Activated CD4-positive, alpha-beta memory T cell treated with anti-CD3 and anti-CD28 coated beads for 36 hours (primary cell): ENCODE measurements at regions of chr6 and their contacts with region 1.

Region 1: GRCh38 chr6:136643850-136644596 is 93.8 kb upstream of the MAP7 start:
- DNase-seq: peak; percentile 85
- H3K4me3 Mint-ChIP-seq: no peak overlapping the region
- H3K27ac Mint-ChIP-seq: no peak overlapping the region
- H3K4me1 Mint-ChIP-seq: no peaks in the 10 kb centered on the region
- H3K27me3 Mint-ChIP-seq: no peaks in the 10 kb centered on the region

Region 2: GRCh38 chr6:136607932-136608772 is 35.9 kb before region 1 on chr6:
- CTCF ChIA-PET with region 1: interaction called, 14 read pairs
- POLR2A ChIA-PET with region 1: no interaction called
- intact Hi-C with region 1: loop called (anchors 5 kb)
- DNase-seq: peak; percentile 90
- H3K4me3 Mint-ChIP-seq: no peak overlapping the region
- H3K27ac Mint-ChIP-seq: no peak overlapping the region
- H3K4me1 Mint-ChIP-seq: peaks cover 15% of the 10 kb centered on the region
- H3K27me3 Mint-ChIP-seq: no peaks in the 10 kb centered on the region

Region 3: DNA sequence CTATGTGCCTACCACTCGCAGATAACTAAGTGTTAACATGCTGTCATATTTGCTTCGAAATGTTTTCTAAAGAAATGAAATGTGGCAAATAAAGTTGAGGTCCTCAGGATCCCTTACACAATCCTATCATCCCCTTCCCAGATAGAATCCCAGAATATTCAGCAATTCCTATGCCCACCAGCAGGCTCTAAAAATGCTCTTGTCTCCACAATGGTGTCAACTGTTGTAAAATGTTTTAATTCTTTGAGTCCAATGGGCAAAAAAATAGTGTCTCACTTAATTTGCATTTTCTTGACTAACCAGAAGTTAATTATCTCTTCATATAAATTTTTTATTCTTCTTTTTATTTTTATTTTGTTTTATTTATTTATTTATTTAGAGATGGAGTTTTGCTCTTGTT is 10.1 kb after region 1 on chr6:
- CTCF ChIA-PET with region 1: interaction called, 10 read pairs
- POLR2A ChIA-PET with region 1: no interaction called
- intact Hi-C with region 1: no loop called
- DNase-seq: no peak
- H3K4me3 Mint-ChIP-seq: no peak overlapping the region
- H3K27ac Mint-ChIP-seq: no peak overlapping the region
- H3K4me1 Mint-ChIP-seq: no peaks in the 10 kb centered on the region
- H3K27me3 Mint-ChIP-seq: no peaks in the 10 kb centered on the region

Region 4: GRCh38 chr6:136719280-136720044 is 75.4 kb after region 1 on chr6:
- CTCF ChIA-PET with region 1: interaction called, 29 read pairs
- POLR2A ChIA-PET with region 1: no interaction called
- intact Hi-C with region 1: loop called (anchors 1 kb)
- DNase-seq: no peak
- H3K4me3 Mint-ChIP-seq: no peak overlapping the region
- H3K27ac Mint-ChIP-seq: peak overlapping the region; percentile 55
- H3K4me1 Mint-ChIP-seq: peaks cover 42% of the 10 kb centered on the region
- H3K27me3 Mint-ChIP-seq: no peaks in the 10 kb centered on the region

Region 5: DNA sequence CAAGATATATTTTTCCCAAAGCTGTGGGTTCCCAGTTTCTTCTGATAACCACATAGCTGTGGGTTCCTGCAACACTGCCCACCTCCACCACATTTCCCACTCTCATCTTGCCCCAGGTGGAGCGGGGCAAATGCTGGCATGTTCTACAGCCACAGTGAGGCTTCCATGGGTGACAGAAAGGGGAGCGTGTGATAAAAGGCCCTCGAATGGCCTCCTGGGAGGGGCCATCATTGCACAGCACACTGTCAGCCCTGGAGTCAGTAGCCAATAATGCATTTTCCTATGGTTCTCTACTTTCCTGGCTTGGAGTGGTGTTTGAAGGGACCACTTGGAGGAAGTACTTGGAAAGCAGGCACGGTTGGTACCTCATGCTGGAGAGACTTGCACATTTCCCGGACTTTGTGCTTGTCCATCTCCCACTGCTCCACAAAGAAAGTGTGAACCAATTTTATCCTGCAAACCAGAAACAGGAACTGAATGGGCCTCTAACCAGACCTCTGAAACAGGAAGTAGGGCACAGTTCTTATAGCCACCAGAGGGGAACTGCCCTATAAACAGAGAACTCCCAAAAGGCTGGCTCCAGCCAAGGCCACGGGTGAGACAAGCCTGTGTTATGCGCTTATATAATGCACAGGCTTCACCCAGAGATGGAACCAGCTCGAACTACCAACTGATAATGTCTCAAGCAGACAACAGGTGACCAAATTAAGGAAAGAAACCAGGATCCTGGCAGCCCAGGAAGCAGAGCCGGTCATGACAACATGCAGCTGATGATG is 139.7 kb after region 1 on chr6:
- CTCF ChIA-PET with region 1: interaction called, 624 read pairs
- POLR2A ChIA-PET with region 1: interaction called, 4 read pairs
- intact Hi-C with region 1: no loop called
- DNase-seq: no peak
- H3K4me3 Mint-ChIP-seq: peak overlapping the region; percentile 50
- H3K27ac Mint-ChIP-seq: peak overlapping the region; percentile 65
- H3K4me1 Mint-ChIP-seq: peaks cover 78% of the 10 kb centered on the region
- H3K27me3 Mint-ChIP-seq: no peaks in the 10 kb centered on the region

Region 6: DNA sequence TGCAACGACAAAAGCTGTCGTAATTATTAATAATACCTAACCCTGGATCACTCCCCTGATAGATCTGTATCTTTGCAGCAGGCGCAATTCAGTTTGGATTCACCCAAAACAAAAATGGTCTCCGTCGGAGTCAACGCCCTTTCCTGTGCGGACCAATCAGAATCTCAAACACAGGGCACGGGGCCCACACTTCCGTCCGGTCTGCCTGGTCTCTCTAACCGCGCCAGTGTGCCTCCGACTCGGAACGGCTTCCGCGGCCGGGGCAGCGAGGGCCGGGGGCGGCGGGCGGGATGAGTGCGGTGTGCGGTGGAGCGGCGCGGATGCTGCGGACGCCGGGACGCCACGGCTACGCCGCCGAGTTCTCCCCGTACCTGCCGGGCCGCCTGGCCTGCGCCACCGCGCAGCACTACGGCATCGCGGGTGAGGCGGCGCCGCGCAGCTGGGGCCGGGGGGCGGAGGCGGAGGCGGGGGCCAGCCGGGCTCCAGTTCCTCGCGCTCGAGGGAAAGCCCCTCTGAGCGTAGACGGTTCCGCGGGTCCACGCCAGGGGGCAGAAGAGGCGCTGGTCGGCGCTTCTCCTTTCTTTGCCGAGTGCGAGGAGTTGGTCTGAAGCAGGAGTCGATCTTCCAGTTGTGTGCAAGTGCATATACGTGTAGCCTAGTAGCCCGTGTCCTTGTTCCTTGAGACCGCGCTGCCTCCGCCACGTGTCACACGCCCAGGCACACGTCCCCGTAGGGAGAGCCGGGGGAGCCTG is 178.5 kb after region 1 on chr6 and contains the start of gene PEX7:
- CTCF ChIA-PET with region 1: interaction called, 34 read pairs
- POLR2A ChIA-PET with region 1: no interaction called
- intact Hi-C with region 1: no loop called
- DNase-seq: peak; percentile 93
- H3K4me3 Mint-ChIP-seq: peak within 1 kb of the TSS; percentile 93
- H3K27ac Mint-ChIP-seq: peak within 1 kb of the TSS; percentile 95
- H3K4me1 Mint-ChIP-seq: peaks cover 17% of the 10 kb centered on the region
- H3K27me3 Mint-ChIP-seq: no peaks in the 10 kb centered on the region
- total RNA-seq, gene PEX7: 5.4 to 6.4 TPM